ENCODE measurements at regions of chr22 and their contacts with region 1.

Region 1: DNA sequence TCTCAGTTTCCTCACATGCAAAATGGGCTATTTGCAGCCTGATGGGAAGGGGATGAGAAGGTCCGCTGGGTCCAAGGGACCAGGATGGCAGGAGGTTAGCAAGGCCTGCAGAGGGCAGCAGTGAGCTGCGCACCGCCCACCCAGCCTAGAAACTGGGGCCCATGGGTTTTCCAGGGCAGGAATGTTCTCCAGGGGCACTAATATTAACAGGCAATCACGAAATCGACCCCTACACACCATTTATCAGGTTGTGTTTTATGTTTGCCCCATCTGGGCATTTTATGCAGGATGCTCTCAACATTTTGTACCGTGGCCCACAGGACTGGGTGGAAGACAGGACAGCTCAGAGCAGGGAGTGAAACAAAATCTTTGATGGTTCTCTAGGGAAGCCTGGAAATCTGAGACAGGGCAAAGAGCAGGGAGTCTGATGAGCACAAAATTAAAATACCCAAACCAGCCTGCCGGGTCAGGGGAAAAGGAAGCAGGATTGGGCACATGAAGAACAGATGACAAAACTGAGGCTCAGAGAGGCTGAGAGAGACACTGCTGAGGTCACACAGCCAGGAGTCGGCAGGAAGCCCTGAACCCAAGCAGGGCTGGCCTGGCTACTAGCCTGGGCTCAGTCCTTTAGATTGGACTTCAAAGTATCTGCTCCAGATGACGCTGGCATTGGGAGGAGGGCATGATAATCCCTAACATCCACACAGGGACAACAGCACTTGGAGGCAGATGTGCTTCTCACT is 1.6 kb upstream of the BCR start:
- DNase-seq: no peak
- H3K4me3 ChIP-seq: no peak overlapping the region
- CTCF ChIP-seq: peak; percentile 97

Region 2: DNA sequence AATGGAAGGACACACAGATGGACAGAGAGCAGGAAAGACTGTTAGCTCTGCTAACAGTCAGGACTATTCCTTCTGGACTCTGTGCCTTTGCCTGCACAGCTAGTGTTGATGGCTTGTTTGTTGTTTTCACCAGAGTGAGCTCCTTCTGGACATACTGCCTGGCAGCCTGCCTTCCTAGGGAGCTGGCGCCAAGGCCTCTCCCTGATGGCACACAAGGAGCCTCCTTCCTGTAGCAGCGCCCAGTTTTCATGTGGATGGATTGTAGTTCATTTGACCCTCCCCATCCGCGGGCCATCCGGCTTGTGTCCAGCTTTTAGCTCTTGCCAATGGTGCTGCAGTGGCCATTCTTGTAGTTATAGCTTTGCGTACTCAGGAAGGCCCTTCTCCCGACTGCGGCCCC is 15.0 kb before region 1 on chr22:
- CTCF ChIA-PET with region 1: interaction called, 87 read pairs
- POLR2A ChIA-PET with region 1: no interaction called
- DNase-seq: no peak
- H3K4me3 ChIP-seq: no peak overlapping the region
- CTCF ChIP-seq: no peak

Region 3: DNA sequence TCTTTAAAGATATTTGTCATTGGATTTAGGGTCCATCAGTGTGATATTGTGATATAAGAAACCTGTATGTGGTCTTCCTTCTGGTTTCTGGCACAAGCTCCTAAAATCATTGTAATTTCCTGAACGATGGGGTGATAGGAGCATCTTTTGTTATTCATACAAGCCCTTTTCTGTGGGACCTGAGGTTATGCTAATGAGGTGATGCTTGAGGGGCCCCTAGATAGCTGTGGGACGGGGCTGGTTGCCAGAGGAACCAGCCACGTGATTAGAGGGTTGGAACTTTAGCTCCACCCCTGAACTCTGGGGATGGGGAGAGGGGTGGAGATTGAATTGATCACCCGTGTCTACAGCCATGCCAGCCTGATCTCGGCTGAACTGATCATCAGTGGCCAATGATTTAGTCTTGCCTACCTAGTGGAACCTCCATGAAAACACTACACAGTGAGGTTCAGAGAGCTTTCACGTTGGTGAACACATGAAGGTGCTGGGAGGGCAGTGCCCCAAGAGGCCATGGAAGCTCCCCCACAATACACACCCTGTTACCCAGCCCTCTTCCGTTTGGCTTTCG is 64.4 kb after region 1 on chr22:
- CTCF ChIA-PET with region 1: interaction called, 13 read pairs
- POLR2A ChIA-PET with region 1: no interaction called
- DNase-seq: no peak
- H3K4me3 ChIP-seq: no peak overlapping the region
- CTCF ChIP-seq: no peak

Region 4: GRCh38 chr22:23365961-23366360 is 187.3 kb after region 1 on chr22:
- CTCF ChIA-PET with region 1: no interaction called
- POLR2A ChIA-PET with region 1: no interaction called
- DNase-seq: no peak
- H3K4me3 ChIP-seq: no peak overlapping the region
- CTCF ChIP-seq: no peak

Region 5: GRCh38 chr22:23376256-23376655 is 197.6 kb after region 1 on chr22:
- CTCF ChIA-PET with region 1: no interaction called
- POLR2A ChIA-PET with region 1: no interaction called
- DNase-seq: no peak
- H3K4me3 ChIP-seq: no peak overlapping the region
- CTCF ChIP-seq: peak; percentile 24

Region 6: GRCh38 chr22:23485490-23485889 is 306.8 kb after region 1 on chr22:
- CTCF ChIA-PET with region 1: no interaction called
- POLR2A ChIA-PET with region 1: no interaction called
- DNase-seq: no peak
- H3K4me3 ChIP-seq: no peak overlapping the region
- CTCF ChIP-seq: no peak

Region 7: GRCh38 chr22:23608583-23608982 is 429.9 kb after region 1 on chr22:
- CTCF ChIA-PET with region 1: no interaction called
- POLR2A ChIA-PET with region 1: no interaction called
- DNase-seq: no peak
- H3K4me3 ChIP-seq: no peak overlapping the region
- CTCF ChIP-seq: no peak